ENCODE measurements at regions of chr20 and their contacts with region 1.

Region 1: DNA sequence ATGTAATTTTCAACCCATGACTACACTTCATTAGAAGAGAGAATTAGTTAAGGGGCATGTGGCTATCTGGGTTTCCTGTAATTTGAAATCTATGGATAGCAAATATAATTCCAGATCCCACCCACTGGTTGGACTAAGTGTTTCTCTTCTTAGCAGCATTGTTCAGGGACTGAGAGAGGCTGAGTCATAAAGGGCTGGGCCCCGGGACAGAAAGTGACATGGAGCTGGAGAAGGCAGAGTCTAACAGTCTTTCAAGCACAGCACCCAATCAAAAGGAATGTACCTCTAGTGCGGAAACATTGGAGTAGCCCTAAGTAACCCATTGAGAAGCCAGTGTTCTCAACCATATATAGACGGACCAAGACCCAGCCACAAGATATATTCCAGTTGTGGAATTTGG is 363.9 kb downstream of the DHX35 start:
- DNase-seq: no peak
- ATAC-seq: no peak
- H3K4me3 Mint-ChIP-seq: no peak overlapping the region
- H3K27ac Mint-ChIP-seq: no peak overlapping the region
- H3K4me1 Mint-ChIP-seq: no peaks in the 10 kb centered on the region
- H3K27me3 Mint-ChIP-seq: peaks cover 21% of the 10 kb centered on the region
- CTCF ChIP-seq: no peak

Region 2: GRCh38 chr20:39298571-39299506 is 27.2 kb before region 1 on chr20:
- CTCF ChIA-PET with region 1: no interaction called
- POLR2A ChIA-PET with region 1: no interaction called
- intact Hi-C with region 1: loop called (anchors 1 kb)
- DNase-seq: no peak
- ATAC-seq: no peak
- H3K4me3 Mint-ChIP-seq: no peak overlapping the region
- H3K27ac Mint-ChIP-seq: no peak overlapping the region
- H3K4me1 Mint-ChIP-seq: peaks cover 2% of the 10 kb centered on the region
- H3K27me3 Mint-ChIP-seq: no peaks in the 10 kb centered on the region
- CTCF ChIP-seq: no peak

Region 3: DNA sequence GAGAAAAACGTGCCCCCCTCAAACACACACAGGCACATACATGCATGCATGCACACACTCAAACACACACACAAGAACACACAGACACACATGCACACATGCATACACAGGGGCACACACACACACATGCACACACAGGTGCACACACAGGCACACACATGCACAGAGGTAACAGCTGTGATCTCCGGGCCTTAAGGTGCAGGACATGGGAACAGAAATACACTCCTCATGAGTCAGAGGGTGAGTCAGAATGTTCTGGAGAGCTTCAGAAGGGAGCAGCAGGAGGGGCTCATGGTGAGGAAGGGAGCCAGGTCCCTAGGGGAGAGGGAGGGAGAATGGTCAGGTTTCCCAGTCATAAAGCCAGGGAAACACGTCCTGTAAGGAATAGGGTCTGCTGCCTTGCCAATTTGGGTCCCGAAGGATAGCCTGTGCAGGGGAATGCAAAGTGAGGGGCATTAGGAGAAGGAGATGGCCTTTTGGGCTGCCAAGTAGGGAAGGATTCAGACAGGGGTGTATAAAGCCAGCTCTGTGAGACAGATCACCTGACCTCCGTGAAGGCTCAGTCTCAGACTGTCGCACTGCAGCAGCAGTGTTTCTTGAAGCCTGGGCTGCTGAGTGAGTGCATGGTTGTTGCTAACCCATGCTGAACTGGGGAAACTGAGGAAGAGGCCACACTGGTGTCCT is 1239.1 kb after region 1 on chr20:
- CTCF ChIA-PET with region 1: no interaction called
- POLR2A ChIA-PET with region 1: no interaction called
- intact Hi-C with region 1: no loop called
- DNase-seq: no peak
- ATAC-seq: no peak
- H3K4me3 Mint-ChIP-seq: no peak overlapping the region
- H3K27ac Mint-ChIP-seq: no peak overlapping the region
- H3K4me1 Mint-ChIP-seq: no peaks in the 10 kb centered on the region
- H3K27me3 Mint-ChIP-seq: peaks cover 4% of the 10 kb centered on the region
- CTCF ChIP-seq: no peak